HepG2 (cell line): ENCODE measurements at regions of chr14 and their contacts with region 1.

Region 1: GRCh38 chr14:32009976-32010863 is 66.9 kb upstream of the ARHGAP5 start:
- DNase-seq: peak; percentile 92
- ATAC-seq: peak; percentile 43
- H3K4me3 ChIP-seq: no peak overlapping the region
- H3K27ac ChIP-seq: no peak overlapping the region
- H3K4me1 ChIP-seq: peaks cover 48% of the 10 kb centered on the region
- H3K27me3 ChIP-seq: peaks cover 0 to 8% of the 10 kb centered on the region in 2 experiments; a peak in 2 of 5 replicates
- CTCF ChIP-seq: no peak
- EP300 ChIP-seq: peak in 1 of 2 experiments; percentile 89; a peak in 2 of 4 replicates
- POLR2A ChIP-seq: no peak
- RAD21 ChIP-seq: no peak

Region 2: DNA sequence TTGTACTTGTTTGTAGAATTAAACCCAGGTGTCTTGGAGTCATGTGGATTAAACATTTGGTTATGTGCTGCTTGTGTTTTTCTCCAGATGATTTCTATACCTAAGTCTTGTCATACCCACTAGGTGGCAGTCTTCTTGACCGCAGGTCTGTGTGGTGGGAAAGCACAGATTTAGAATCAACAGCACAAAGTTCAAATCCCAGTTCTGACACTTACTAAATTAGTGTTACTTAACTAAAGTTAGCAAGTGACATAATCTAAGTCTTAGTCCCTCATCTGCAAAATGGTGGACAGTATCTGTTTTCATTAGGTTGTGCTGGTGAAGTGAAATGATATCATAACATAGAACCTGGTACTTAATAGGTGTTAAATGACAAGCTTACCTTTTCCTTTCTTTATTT is 84.1 kb before region 1 on chr14:
- CTCF ChIA-PET with region 1: no interaction called
- POLR2A ChIA-PET with region 1: interaction called, 3 read pairs
- in situ Hi-C with region 1: no loop called
- intact Hi-C with region 1: loop called (anchors 2 kb)
- DNase-seq: peak; percentile 87
- ATAC-seq: peak; percentile 80
- H3K4me3 ChIP-seq: no peak overlapping the region
- H3K27ac ChIP-seq: no peak overlapping the region
- H3K4me1 ChIP-seq: peaks cover 14% of the 10 kb centered on the region; the same call in 1 of the 2 replicates
- H3K27me3 ChIP-seq: no peaks in the 10 kb centered on the region; a peak in 1 of 5 replicates
- CTCF ChIP-seq: peak; percentile 86
- EP300 ChIP-seq: no peak
- POLR2A ChIP-seq: no peak
- RAD21 ChIP-seq: peak; percentile 85

Region 3: GRCh38 chr14:31937721-31938346 is 72.4 kb before region 1 on chr14:
- CTCF ChIA-PET with region 1: no interaction called
- POLR2A ChIA-PET with region 1: interaction called, 5 read pairs
- in situ Hi-C with region 1: no loop called
- intact Hi-C with region 1: loop called (anchors 1 kb)
- DNase-seq: peak; percentile 98
- ATAC-seq: peak; percentile 88
- H3K4me3 ChIP-seq: no peak overlapping the region
- H3K27ac ChIP-seq: no peak overlapping the region
- H3K4me1 ChIP-seq: peaks cover 59% of the 10 kb centered on the region
- H3K27me3 ChIP-seq: no peaks in the 10 kb centered on the region
- CTCF ChIP-seq: no peak
- EP300 ChIP-seq: peak; percentile 33 to 84; a peak in 1 of 4 replicates
- POLR2A ChIP-seq: no peak
- RAD21 ChIP-seq: no peak

Region 4: GRCh38 chr14:31945074-31945613 is 65.1 kb before region 1 on chr14:
- CTCF ChIA-PET with region 1: no interaction called
- POLR2A ChIA-PET with region 1: interaction called, 5 read pairs
- in situ Hi-C with region 1: no loop called
- intact Hi-C with region 1: loop called (anchors 2 kb)
- DNase-seq: peak; percentile 60
- ATAC-seq: peak; percentile 29
- H3K4me3 ChIP-seq: peak overlapping the region; percentile 41 to 62 (median 44)
- H3K27ac ChIP-seq: peak overlapping the region; percentile 27
- H3K4me1 ChIP-seq: peaks cover 64% of the 10 kb centered on the region
- H3K27me3 ChIP-seq: no peaks in the 10 kb centered on the region
- CTCF ChIP-seq: no peak
- EP300 ChIP-seq: no peak; a peak in 1 of 4 replicates
- POLR2A ChIP-seq: no peak
- RAD21 ChIP-seq: no peak

Region 5: GRCh38 chr14:31968107-31968810 is 42.0 kb before region 1 on chr14:
- CTCF ChIA-PET with region 1: no interaction called
- POLR2A ChIA-PET with region 1: interaction called, 3 read pairs
- in situ Hi-C with region 1: no loop called
- intact Hi-C with region 1: loop called (anchors 2 kb)
- DNase-seq: peak; percentile 86
- ATAC-seq: peak; percentile 10
- H3K4me3 ChIP-seq: peak overlapping the region in 1 of 3 experiments; percentile 20; a peak in 1 of 6 replicates
- H3K27ac ChIP-seq: no peak overlapping the region
- H3K4me1 ChIP-seq: peaks cover 53% of the 10 kb centered on the region
- H3K27me3 ChIP-seq: no peaks in the 10 kb centered on the region
- CTCF ChIP-seq: no peak
- EP300 ChIP-seq: peak in 1 of 2 experiments; percentile 43; a peak in 2 of 4 replicates
- POLR2A ChIP-seq: no peak
- RAD21 ChIP-seq: no peak

Region 6: DNA sequence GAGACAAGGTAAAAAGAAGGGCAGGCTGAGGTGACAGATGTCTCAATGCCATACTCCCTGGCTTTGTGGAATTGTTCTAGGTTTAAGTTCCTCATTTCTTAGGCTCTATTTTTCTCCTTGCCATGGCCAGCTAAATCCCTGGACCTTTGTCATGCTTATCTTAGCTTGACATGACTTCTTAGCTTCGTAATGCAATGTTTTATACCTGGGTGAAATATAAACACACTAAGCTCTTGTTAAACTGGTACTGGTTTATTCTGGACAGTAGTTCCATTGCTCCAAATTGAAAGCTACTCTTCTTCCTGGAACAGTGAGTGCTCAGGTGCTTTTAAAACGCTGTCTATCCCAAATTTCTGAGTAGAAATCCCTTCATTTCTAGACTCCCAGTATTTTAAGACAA is 49.5 kb after region 1 on chr14:
- CTCF ChIA-PET with region 1: no interaction called
- POLR2A ChIA-PET with region 1: no interaction called
- in situ Hi-C with region 1: no loop called
- intact Hi-C with region 1: no loop called
- DNase-seq: no peak
- ATAC-seq: no peak
- H3K4me3 ChIP-seq: no peak overlapping the region
- H3K27ac ChIP-seq: no peak overlapping the region
- H3K4me1 ChIP-seq: no peaks in the 10 kb centered on the region
- H3K27me3 ChIP-seq: no peaks in the 10 kb centered on the region
- CTCF ChIP-seq: no peak
- EP300 ChIP-seq: no peak
- POLR2A ChIP-seq: no peak
- RAD21 ChIP-seq: no peak

Region 7: GRCh38 chr14:32319362-32320049 is 309.3 kb after region 1 on chr14:
- CTCF ChIA-PET with region 1: no interaction called
- POLR2A ChIA-PET with region 1: no interaction called
- in situ Hi-C with region 1: no loop called
- intact Hi-C with region 1: no loop called
- DNase-seq: no peak
- ATAC-seq: no peak
- H3K4me3 ChIP-seq: no peak overlapping the region
- H3K27ac ChIP-seq: no peak overlapping the region
- H3K4me1 ChIP-seq: no peaks in the 10 kb centered on the region
- H3K27me3 ChIP-seq: no peaks in the 10 kb centered on the region
- CTCF ChIP-seq: no peak
- EP300 ChIP-seq: no peak
- POLR2A ChIP-seq: no peak
- RAD21 ChIP-seq: no peak